Activated CD4-positive, alpha-beta memory T cell treated with anti-CD3 and anti-CD28 coated beads for 36 hours (primary cell): ENCODE measurements at regions of chr18 and their contacts with region 1.

Region 1: GRCh38 chr18:69898241-69898861 is 49.3 kb downstream of the CD226 start:
- DNase-seq: peak; percentile 59
- H3K4me3 Mint-ChIP-seq: peak overlapping the region; percentile 67
- H3K27ac Mint-ChIP-seq: peak overlapping the region; percentile 94
- H3K4me1 Mint-ChIP-seq: peaks cover 78% of the 10 kb centered on the region
- H3K27me3 Mint-ChIP-seq: no peaks in the 10 kb centered on the region

Region 2: DNA sequence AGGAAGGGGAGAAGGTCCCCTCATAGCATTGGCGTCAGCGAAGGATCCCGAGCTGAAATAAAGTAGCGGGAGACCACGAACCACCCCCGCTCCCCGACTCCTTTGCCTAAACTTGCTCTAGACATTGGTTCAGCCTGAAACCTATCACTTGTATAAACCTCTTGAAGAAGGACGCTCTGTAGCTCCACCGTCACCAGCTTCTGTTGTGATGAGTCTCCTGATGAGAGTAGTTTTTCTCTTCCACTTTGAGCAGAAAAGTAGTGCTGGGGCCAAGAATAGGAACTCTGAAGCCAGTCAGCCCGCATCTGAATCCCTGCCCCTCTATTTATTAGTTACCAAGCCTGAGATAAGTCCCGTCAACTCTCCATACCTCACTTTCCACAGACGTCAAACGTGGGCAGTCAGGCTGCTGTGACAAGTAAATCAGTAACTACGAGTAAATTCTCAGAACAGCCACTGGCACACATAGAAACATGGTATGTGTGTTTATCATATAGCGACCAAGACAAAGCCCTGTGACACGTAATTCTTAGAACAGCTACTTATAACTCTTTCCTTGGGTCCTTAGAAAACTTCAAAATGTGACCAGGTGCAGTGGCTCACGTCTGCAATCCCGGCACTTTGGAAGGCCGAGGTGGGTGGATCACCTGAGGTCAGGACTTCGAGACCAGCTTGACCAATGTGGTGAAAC is 12.4 kb before region 1 on chr18:
- CTCF ChIA-PET with region 1: interaction called, 9 read pairs
- POLR2A ChIA-PET with region 1: interaction called, 60 read pairs
- intact Hi-C with region 1: loop called (anchors 1 kb)
- DNase-seq: peak; percentile 85
- H3K4me3 Mint-ChIP-seq: peak overlapping the region; percentile 73
- H3K27ac Mint-ChIP-seq: peak overlapping the region; percentile 97
- H3K4me1 Mint-ChIP-seq: peaks cover 86% of the 10 kb centered on the region
- H3K27me3 Mint-ChIP-seq: no peaks in the 10 kb centered on the region

Region 3: GRCh38 chr18:69935319-69936190 is 37.2 kb after region 1 on chr18:
- CTCF ChIA-PET with region 1: interaction called, 22 read pairs
- POLR2A ChIA-PET with region 1: interaction called, 40 read pairs
- intact Hi-C with region 1: loop called (anchors 1 kb)
- DNase-seq: peak; percentile 94
- H3K4me3 Mint-ChIP-seq: no peak overlapping the region
- H3K27ac Mint-ChIP-seq: no peak overlapping the region
- H3K4me1 Mint-ChIP-seq: peaks cover 37% of the 10 kb centered on the region
- H3K27me3 Mint-ChIP-seq: no peaks in the 10 kb centered on the region

Region 4: GRCh38 chr18:69948919-69949537 is 50.7 kb after region 1 on chr18:
- CTCF ChIA-PET with region 1: interaction called, 14 read pairs
- POLR2A ChIA-PET with region 1: interaction called, 43 read pairs
- intact Hi-C with region 1: loop called (anchors 1 kb)
- DNase-seq: peak; percentile 85
- H3K4me3 Mint-ChIP-seq: no peak overlapping the region
- H3K27ac Mint-ChIP-seq: no peak overlapping the region
- H3K4me1 Mint-ChIP-seq: peaks cover 50% of the 10 kb centered on the region
- H3K27me3 Mint-ChIP-seq: no peaks in the 10 kb centered on the region

Region 5: GRCh38 chr18:69978732-69979715 is 80.7 kb after region 1 on chr18:
- CTCF ChIA-PET with region 1: no interaction called
- POLR2A ChIA-PET with region 1: interaction called, 3 read pairs
- intact Hi-C with region 1: loop called (anchors 1 kb)
- DNase-seq: peak; percentile 25
- H3K4me3 Mint-ChIP-seq: no peak overlapping the region
- H3K27ac Mint-ChIP-seq: peak overlapping the region; percentile 65
- H3K4me1 Mint-ChIP-seq: peaks cover 45% of the 10 kb centered on the region
- H3K27me3 Mint-ChIP-seq: no peaks in the 10 kb centered on the region

Region 6: GRCh38 chr18:70195852-70196434 is 297.6 kb after region 1 on chr18:
- CTCF ChIA-PET with region 1: no interaction called
- POLR2A ChIA-PET with region 1: no interaction called
- intact Hi-C with region 1: loop called (anchors 5 kb)
- DNase-seq: peak; percentile 16
- H3K4me3 Mint-ChIP-seq: no peak overlapping the region
- H3K27ac Mint-ChIP-seq: no peak overlapping the region
- H3K4me1 Mint-ChIP-seq: peaks cover 33% of the 10 kb centered on the region
- H3K27me3 Mint-ChIP-seq: no peaks in the 10 kb centered on the region